ENCODE measurements at regions of chr18 and their contacts with region 1.

Region 1: DNA sequence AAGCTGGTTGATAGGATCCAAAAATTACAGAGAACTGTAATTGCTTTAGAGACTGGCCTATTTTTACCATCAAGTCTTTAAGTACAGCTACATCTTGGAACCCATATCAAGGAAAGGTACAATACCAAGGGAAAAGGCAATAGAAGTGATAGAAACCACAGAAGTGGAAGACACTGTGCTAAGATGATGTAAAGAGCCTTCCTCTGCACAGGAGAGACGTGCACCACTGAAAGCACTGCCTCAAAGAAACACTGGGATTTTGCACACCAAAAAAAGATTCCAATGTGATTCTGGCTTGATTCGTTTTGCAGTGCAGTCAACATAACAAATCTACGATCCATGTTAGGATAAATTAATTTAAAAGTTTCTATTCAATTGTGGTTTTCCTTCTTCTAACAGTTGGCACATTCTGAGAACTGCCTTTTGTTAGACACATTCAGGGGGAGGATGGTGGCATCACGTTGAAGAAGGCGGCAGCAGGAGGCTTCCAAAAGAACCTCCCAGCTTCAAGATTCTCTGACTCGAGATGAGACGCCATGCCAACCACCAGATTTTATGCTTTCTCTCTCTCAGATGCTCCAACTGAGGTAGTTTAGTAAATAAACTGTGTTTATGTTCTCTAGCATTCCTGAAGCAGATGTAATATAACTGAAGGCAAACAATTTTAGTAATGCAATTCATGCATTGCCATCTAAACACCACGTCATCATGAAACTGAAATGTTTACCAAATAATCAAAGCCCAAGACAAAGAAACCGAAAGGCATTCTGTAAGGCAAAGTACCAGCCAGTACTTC is 102.9 kb downstream of the BCL2 start:
- DNase-seq: no peak
- H3K4me3 Mint-ChIP-seq: peak overlapping the region; percentile 57
- H3K27ac Mint-ChIP-seq: peak overlapping the region; percentile 91
- H3K4me1 Mint-ChIP-seq: peaks cover 88% of the 10 kb centered on the region
- H3K27me3 Mint-ChIP-seq: no peaks in the 10 kb centered on the region

Region 2: DNA sequence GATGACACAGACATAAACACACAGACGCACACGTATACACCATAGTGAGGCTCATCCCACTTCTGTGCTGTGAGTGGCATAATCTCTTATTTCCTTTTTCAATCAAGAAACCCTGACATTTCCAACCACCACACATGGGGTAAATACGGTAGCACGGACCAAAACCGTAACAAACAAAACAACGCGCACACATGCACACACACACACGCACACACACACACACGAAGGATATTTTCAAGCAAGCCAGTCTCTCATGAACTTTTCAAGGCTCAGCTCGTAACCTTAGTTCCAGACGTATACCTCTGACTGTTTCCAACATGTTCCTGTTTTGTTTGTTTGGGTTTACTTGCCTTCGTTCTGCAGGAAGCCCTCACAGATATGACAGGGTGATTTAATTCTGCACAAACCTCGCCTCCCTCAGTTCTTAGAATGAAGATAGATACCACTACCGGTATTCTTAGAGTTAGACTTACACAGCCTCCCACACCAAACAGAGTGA is 16.9 kb before region 1 on chr18:
- intact Hi-C with region 1: loop called (anchors 2 kb)
- DNase-seq: peak; percentile 56
- H3K4me3 Mint-ChIP-seq: no peak overlapping the region
- H3K27ac Mint-ChIP-seq: no peak overlapping the region
- H3K4me1 Mint-ChIP-seq: peaks cover 30% of the 10 kb centered on the region
- H3K27me3 Mint-ChIP-seq: no peaks in the 10 kb centered on the region

Region 3: GRCh38 chr18:63234841-63235240 is 18.1 kb after region 1 on chr18:
- intact Hi-C with region 1: loop called (anchors 2 kb)
- DNase-seq: no peak
- H3K4me3 Mint-ChIP-seq: peak overlapping the region; percentile 17
- H3K27ac Mint-ChIP-seq: peak overlapping the region; percentile 80
- H3K4me1 Mint-ChIP-seq: peaks cover 71% of the 10 kb centered on the region
- H3K27me3 Mint-ChIP-seq: no peaks in the 10 kb centered on the region

Region 4: DNA sequence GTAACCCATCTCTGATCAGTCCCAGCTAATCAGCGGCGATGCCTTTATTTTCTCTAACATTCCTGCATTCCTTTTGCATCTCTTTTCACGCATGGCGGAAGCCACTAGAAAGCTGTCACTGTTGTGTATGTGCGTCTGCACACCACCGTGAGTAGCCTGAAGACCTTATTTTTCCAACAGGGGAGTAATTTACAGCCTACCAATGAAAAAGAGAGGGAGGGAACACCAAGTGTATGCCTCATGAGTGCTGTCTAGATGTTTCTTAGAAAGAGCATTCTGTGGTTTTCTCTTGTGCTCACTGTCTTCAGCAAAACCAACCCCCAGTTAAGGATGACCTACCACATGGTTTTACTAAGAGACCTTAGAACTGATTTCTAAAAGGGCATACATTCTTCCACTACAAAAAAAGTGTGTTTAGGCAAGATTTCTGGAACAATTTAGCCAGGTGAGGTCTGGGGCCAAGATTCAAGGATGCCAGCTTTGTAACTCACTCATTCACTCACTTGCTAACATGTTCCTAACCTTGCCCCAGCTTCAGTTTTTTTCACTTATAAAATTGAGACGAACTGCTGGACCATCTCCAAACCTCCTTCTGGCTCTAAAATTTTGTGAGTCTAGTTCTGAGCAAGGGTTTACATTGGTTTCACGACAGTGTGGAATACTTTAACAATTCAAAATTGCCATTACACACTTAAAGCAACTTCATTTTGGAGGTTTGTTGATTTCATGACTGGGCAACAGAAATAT is 51.4 kb after region 1 on chr18:
- intact Hi-C with region 1: loop called (anchors 2 kb)
- DNase-seq: no peak
- H3K4me3 Mint-ChIP-seq: peak overlapping the region; percentile 60
- H3K27ac Mint-ChIP-seq: peak overlapping the region; percentile 83
- H3K4me1 Mint-ChIP-seq: peaks cover 57% of the 10 kb centered on the region
- H3K27me3 Mint-ChIP-seq: no peaks in the 10 kb centered on the region

Region 5: DNA sequence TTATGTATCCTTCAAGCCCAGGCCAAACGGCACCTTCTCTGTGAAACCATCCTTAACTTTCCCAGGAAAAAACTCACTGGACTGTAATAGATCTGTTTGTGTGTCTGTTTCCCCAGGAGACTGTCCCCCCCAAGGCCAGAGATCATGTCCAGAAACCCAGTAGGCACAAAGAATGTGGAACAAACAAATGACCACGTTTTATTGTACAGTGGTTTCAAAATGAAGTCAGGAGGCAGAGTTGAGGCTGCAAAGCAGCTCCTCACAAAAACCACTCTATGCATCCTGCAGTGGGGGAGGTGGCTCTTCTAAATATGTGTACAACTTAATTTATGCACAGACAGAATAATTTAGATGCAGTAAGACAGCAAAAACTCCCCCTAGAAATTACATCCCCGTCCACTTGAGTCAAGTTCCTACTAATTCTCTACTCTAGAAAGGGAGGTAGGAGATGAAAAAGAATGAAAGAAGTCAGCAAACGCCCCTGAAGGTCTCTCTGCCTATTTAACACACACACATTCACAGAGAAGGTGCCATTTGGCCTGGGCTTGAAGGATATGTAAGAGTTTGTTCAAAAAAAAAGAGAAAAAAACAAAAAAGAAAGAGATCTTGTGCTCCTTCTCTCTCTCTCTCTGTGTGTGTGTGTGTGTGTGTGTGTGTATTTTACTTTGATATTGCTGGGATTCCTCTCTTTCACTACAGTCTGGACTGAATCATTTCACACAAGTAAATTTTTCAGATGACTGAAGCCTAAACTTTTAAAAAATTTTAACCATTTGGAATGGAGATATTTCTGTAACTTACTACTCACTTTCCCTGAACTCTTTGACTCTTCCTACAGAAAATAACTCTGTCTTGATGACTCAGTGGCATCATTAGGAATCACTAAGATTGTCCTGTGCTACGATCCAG is 83.4 kb after region 1 on chr18:
- intact Hi-C with region 1: loop called (anchors 1 kb)
- DNase-seq: no peak
- H3K4me3 Mint-ChIP-seq: peak overlapping the region; percentile 61
- H3K27ac Mint-ChIP-seq: peak overlapping the region; percentile 94
- H3K4me1 Mint-ChIP-seq: peaks cover 79% of the 10 kb centered on the region
- H3K27me3 Mint-ChIP-seq: no peaks in the 10 kb centered on the region